Tibial artery (tissue), 4 donors: ENCODE measurements at regions of chr3 and their contacts with region 1.

Region 1: DNA sequence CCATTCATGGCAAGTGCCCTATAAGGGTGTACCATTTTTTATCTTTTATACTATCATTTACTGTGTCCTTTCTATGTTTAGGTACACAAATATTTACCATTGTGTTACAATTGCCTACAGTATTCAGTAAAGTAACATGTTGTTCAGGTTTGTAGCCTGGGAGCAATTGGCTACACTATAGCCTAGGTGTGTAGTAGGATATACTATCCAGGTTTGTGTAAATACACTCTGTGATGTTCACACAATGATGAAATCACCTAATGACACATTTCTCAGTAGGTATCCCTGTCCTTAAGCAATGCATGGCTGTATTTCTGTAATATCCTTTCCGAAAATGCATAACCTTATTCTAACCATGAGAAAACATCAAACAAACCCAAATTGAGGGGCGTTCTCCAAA is 17.9 kb upstream of the CNOT10 start:
- DNase-seq: no peak
- H3K4me3 ChIP-seq: no peak overlapping the region
- H3K27ac ChIP-seq: no peak overlapping the region
- H3K4me1 ChIP-seq: no peaks in the 10 kb centered on the region
- H3K27me3 ChIP-seq: peaks cover 0 to 5% of the 10 kb centered on the region in 2 donors
- CTCF ChIP-seq: no peak

Region 2: GRCh38 chr3:32366638-32367397 is 300.3 kb before region 1 on chr3:
- intact Hi-C with region 1: loop called (anchors 10 kb)
- DNase-seq: no peak
- H3K4me3 ChIP-seq: no peak overlapping the region
- H3K27ac ChIP-seq: no peak overlapping the region
- H3K4me1 ChIP-seq: no peaks in the 10 kb centered on the region
- H3K27me3 ChIP-seq: no peaks in the 10 kb centered on the region
- CTCF ChIP-seq: no peak

Region 3: DNA sequence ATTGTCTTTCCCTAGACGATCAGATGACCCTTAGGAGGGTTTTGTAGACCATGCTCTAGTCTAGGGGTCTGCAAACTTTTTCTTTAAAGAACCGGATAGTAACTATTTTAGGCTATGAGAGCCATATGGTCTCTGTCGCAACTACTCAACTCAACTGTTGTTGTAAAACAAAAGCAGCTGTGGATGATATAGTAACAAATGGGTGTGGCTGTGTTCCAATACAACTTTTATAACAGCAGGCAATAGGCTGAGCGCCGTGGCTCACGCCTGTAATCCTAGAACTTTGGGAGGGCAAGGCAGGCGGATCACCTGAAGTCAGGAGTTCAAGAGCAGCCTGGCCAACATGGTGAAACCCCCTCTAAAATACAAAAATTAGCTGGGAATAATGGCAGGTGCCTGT is 158.4 kb before region 1 on chr3:
- intact Hi-C with region 1: loop called (anchors 5 kb)
- DNase-seq: no peak
- H3K4me3 ChIP-seq: no peak overlapping the region
- H3K27ac ChIP-seq: no peak overlapping the region
- H3K4me1 ChIP-seq: no peaks in the 10 kb centered on the region
- H3K27me3 ChIP-seq: no peaks in the 10 kb centered on the region
- CTCF ChIP-seq: no peak